ENCODE measurements at regions of chr12 and their contacts with region 1.

Region 1: DNA sequence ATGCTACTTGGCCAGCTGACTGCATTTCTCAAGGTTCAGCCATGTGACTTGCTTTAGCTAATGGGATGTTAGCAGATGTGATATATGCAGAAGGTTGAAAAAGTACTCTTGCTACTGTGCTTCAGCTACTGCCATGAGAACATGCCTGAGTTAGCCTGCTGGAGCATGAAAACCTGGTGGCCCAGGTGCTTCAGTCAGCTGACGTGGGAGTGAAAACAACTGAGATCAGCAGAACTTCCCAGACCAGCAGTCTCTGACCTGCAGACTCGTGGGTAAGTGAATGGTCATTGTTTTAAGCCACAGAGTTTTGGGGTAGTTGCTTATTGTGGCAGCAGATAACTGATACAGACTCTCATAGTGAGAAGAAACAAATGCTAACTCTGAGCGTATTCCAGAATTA is 118.6 kb upstream of the GRIN2B start:
- DNase-seq: no peak
- H3K4me3 ChIP-seq: no peak overlapping the region
- H3K27ac ChIP-seq: no peak overlapping the region
- H3K4me1 ChIP-seq: no peaks in the 10 kb centered on the region
- H3K27me3 ChIP-seq: no peaks in the 10 kb centered on the region
- CTCF ChIP-seq: no peak
- EP300 ChIP-seq: no peak
- POLR2A ChIP-seq: no peak
- RAD21 ChIP-seq: no peak

Region 2: GRCh38 chr12:14111230-14111865 is 11.4 kb after region 1 on chr12:
- CTCF ChIA-PET with region 1: interaction called, 15 read pairs
- POLR2A ChIA-PET with region 1: no interaction called
- DNase-seq: peak in 1 of 2 experiments; percentile 49
- H3K4me3 ChIP-seq: no peak overlapping the region
- H3K27ac ChIP-seq: no peak overlapping the region
- H3K4me1 ChIP-seq: no peaks in the 10 kb centered on the region
- H3K27me3 ChIP-seq: no peaks in the 10 kb centered on the region
- CTCF ChIP-seq: peak; percentile 60 to 82 (median 62)
- EP300 ChIP-seq: no peak
- POLR2A ChIP-seq: no peak
- RAD21 ChIP-seq: peak; percentile 51 to 63

Measured in H1 (cell line).